H1 (cell line): ENCODE measurements at regions of chr5 and their contacts with region 1.

Region 1: DNA sequence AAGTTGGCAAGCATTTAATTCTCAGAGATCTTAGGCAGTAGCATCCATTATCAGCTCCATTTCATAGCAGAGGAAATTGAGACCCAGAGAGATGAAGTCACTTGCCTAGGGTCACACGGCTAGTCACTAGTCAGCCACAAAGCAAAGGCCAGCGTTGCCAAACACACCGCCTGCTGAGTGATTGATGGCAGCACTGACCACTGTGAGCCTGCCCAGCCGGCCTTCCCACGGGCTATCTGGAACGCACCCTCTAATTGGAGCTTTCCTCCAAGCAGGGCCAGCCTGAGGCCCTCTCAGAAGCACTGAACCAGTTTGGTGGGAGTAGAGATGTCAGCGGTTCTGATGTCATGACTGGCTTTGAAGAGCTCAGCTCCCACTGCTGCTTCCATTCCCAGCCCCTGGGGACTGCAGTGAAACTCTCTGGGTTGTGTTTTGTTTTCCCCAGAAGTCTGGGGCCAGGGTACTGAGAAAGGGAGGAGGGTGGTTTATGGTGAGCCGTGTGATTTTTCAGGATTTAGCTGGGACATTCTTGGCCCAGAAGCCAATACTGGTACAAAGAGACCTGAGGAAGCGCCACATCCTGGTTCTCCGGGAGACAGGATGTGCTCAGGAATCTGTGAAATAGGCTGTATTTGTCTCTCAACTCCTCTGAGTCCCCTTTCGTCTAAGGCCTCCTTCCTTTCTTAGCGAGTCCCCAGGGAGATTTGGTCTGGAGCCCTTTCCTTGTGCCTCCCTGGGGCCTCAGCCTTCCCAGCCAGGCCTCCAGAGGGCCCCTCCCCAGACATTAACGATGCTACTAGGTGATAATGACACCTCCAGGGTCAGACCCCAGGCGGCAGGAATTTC is 44.5 kb downstream of the SPRY4 start:
- DNase-seq: peak in 1 of 2 experiments; percentile 77
- H3K4me3 ChIP-seq: no peak overlapping the region
- H3K27ac ChIP-seq: no peak overlapping the region; the same call in 1 of the 2 replicates
- H3K4me1 ChIP-seq: peaks cover 7 to 18% (median 9%) of the 10 kb centered on the region in 4 experiments
- H3K27me3 ChIP-seq: no peaks in the 10 kb centered on the region
- CTCF ChIP-seq: peak in 1 of 3 experiments; percentile 2; a peak in 1 of 4 replicates
- EP300 ChIP-seq: no peak
- POLR2A ChIP-seq: peak in 1 of 2 experiments; percentile 34; a peak in 1 of 3 replicates
- RAD21 ChIP-seq: no peak

Region 2: DNA sequence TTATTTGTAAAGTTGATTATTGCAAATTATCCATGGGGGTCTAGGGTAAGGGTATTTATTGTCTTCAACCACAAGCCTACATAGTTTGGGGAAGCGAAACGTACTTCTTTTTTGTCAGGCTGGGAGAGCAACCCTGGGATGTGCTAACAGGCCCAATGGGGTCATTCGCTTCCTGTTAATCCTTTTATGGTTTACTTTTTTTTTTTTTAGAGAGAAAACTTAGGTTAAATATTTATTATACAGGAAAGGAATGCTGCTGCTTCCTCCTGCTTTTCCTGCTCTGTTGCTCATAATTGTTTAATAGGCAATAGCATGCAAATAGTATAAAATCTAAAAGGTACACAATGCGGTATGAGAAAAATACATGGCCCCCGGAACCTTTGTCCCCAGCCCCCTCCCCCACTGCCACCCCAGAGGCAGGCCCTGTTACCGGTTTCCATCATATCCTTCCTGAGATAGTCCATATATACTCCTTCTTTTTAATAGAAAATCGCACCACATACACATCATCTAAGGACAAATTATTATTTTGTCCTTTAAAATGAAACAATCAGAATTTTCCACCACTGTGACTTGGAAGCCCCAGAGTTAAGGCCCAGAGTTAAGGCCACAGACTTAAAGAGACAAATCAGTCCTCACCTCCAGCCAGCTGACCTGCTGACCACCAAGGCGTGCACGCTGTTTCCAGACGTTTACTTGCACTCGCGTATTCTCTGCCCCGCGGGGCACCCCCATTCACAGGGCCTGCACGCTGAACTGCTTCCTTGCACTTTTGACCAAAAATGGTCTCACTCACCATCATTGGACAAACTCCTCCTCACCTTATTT is 87.8 kb before region 1 on chr5:
- CTCF ChIA-PET with region 1: no interaction called
- POLR2A ChIA-PET with region 1: no interaction called
- DNase-seq: no peak
- H3K4me3 ChIP-seq: no peak overlapping the region
- H3K27ac ChIP-seq: no peak overlapping the region
- H3K4me1 ChIP-seq: peaks cover 0 to 3% (median 0%) of the 10 kb centered on the region in 4 experiments; a peak in 3 of 7 replicates
- H3K27me3 ChIP-seq: no peaks in the 10 kb centered on the region
- CTCF ChIP-seq: no peak
- EP300 ChIP-seq: no peak
- POLR2A ChIP-seq: no peak
- RAD21 ChIP-seq: no peak

Region 3: GRCh38 chr5:142206801-142207200 is 73.5 kb before region 1 on chr5:
- CTCF ChIA-PET with region 1: no interaction called
- POLR2A ChIA-PET with region 1: no interaction called
- DNase-seq: no peak
- H3K4me3 ChIP-seq: no peak overlapping the region
- H3K27ac ChIP-seq: no peak overlapping the region
- H3K4me1 ChIP-seq: peaks cover 0 to 9% (median 3%) of the 10 kb centered on the region in 4 experiments
- H3K27me3 ChIP-seq: no peaks in the 10 kb centered on the region; a peak in 1 of 7 replicates
- CTCF ChIP-seq: peak in 2 of 3 experiments; percentile 18 to 27; a peak in 2 of 4 replicates
- EP300 ChIP-seq: no peak
- POLR2A ChIP-seq: no peak
- RAD21 ChIP-seq: peak; percentile 28 to 45; a peak in 3 of 4 replicates

Region 4: DNA sequence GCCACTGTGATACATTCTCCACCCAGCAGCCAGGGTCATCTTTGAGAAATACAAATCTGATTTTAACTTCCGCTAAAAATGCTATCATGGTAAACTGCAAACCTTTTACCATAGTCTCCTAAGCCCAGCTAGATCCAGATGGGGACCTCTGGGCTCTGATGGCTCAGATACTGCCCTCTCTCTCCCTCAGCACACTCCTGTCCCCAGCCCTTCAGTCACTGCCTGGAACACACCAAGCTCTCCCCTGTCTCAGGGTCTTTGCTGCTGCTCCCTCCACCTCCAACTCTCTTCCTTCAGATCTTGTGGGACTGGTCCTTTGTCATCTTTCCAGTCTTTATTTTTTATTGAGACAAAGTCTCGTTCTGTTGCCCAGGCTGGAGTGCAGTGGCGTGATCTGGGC is 20.5 kb before region 1 on chr5:
- CTCF ChIA-PET with region 1: interaction called, 4 read pairs
- POLR2A ChIA-PET with region 1: interaction called, 10 read pairs
- DNase-seq: no peak
- H3K4me3 ChIP-seq: no peak overlapping the region
- H3K27ac ChIP-seq: no peak overlapping the region
- H3K4me1 ChIP-seq: peaks cover 0 to 8% (median 3%) of the 10 kb centered on the region in 4 experiments; a peak in 3 of 7 replicates
- H3K27me3 ChIP-seq: no peaks in the 10 kb centered on the region
- CTCF ChIP-seq: no peak
- EP300 ChIP-seq: no peak
- POLR2A ChIP-seq: no peak
- RAD21 ChIP-seq: no peak

Region 5: GRCh38 chr5:142290577-142291299 is 10.4 kb after region 1 on chr5:
- CTCF ChIA-PET with region 1: interaction called, 3 read pairs
- POLR2A ChIA-PET with region 1: interaction called, 24 read pairs
- DNase-seq: no peak
- H3K4me3 ChIP-seq: no peak overlapping the region
- H3K27ac ChIP-seq: no peak overlapping the region
- H3K4me1 ChIP-seq: peaks cover 5 to 23% (median 13%) of the 10 kb centered on the region in 4 experiments
- H3K27me3 ChIP-seq: no peaks in the 10 kb centered on the region
- CTCF ChIP-seq: no peak
- EP300 ChIP-seq: no peak
- POLR2A ChIP-seq: no peak
- RAD21 ChIP-seq: no peak

Region 6: DNA sequence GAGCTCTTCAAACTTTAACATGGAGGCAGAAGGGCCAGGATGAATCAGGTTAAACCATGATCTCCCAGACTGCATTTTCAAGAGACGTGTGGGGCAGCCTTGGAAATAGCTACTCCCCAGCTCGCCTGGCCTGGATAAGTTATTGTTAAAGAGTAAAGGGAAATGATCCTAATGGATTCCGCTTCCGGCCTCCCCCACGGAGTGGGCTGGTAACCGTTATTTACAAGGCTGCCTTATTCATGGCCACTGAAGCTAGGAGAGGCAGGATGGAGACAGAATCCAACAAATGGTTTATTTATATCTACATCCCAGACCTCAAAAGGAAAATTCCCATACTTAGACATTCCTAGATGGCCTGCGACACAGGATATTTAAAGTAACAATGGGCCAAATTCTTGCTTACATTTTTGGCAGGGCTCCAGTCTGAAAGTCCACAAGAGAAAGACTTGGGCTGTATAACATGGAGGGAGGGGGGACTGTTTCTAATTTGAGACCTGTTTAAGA is 16.7 kb after region 1 on chr5:
- CTCF ChIA-PET with region 1: interaction called, 3 read pairs
- POLR2A ChIA-PET with region 1: interaction called, 14 read pairs
- DNase-seq: no peak
- H3K4me3 ChIP-seq: no peak overlapping the region
- H3K27ac ChIP-seq: no peak overlapping the region
- H3K4me1 ChIP-seq: peaks cover 8 to 17% (median 13%) of the 10 kb centered on the region in 4 experiments
- H3K27me3 ChIP-seq: no peaks in the 10 kb centered on the region
- CTCF ChIP-seq: no peak
- EP300 ChIP-seq: no peak
- POLR2A ChIP-seq: no peak
- RAD21 ChIP-seq: no peak